ENCODE measurements at regions of chr3 and their contacts with region 1.

Region 1: DNA sequence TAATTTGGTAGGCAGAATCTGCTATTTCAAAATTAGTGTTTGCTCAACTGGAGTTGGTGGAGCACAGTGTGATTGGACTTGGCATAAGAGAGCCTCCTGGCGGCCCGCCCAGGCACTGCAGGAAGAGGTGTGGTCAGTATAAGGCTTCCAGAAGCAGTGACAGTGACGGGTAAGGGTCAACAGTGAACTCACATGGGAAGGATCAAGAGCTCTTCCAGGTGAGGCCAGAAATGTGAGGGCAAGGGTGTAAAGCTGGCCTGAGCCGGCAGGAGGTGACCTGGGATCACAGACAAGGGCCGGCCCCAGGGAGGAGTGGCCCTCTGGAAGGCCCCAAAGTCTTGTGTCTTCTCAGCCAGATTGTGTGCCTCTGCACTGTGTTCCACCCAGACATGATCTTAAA is 93.2 kb upstream of the RNF7 start:
- DNase-seq: peak; percentile 79
- CTCF ChIP-seq: peak; percentile 83

Region 2: DNA sequence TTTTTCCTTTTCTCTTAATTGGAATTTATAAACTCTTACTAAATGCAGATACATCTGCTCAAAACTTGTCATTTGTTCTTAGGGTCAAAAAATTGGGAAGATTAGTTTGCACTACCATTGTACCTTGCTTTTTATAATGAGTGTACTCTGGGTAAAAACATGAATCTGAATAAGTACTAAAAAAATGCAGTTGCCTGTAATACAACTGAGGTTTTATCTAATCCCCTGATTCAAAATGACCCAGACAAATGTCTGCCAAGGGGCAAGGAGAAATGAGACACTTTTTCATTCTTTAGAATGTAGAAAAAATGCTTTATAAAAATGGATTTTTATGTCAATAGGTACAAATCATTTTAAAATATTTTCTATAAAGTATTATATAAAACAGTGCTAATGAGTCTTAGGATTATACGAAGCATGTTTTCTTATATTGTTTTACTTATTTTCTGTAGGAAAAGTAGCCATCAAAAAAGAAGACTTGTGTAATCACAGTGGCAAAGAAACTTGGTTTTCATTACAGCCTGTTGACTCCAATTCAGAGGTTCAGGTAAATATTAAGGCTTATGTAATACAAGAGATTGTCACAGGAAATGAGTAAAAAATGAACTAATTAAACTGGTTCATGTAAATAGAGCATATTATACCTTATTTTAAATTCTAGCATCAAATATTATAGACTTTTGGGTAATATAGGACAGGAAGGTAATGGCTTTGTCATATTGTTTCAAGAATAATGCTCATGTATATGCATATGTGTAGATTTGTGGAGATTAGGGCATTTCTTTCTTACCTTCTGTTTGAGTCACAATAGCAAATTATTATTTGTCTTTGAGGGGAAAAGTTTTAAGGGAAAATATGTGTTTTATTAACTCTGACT is 115.4 kb before region 1 on chr3:
- CTCF ChIA-PET with region 1: no interaction called
- POLR2A ChIA-PET with region 1: no interaction called
- DNase-seq: no peak
- CTCF ChIP-seq: no peak

Region 3: DNA sequence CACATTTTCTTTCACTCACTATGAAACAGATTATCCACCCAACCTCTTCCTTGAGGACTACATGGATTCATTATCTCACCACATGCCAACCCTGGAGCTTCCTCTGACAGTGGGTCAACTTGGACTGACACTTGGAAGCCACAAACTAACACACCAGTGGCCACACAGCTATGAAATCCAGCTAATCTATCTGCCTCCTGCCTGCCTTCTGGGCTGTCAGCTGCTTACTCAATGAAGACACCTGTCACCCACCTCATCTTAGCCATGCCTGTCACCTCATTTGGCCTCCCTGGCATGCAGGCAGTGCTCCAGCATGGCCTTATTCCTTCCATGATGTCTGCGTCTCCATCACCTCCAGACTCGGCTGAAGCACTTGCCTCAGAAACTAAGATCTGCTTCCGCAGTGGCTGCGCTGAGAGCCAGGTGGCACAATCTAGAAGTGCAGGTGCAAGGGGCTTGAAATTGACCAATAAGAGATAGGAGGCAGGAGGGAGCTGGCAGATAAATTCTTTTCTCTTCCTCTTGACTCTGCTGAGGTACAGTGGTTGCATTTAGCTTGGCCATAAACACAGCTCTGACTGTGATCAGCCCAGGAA is 12.1 kb before region 1 on chr3:
- CTCF ChIA-PET with region 1: interaction called, 16 read pairs
- POLR2A ChIA-PET with region 1: no interaction called
- DNase-seq: no peak
- CTCF ChIP-seq: no peak

Region 4: GRCh38 chr3:141669434-141669833 is 24.5 kb after region 1 on chr3:
- CTCF ChIA-PET with region 1: no interaction called
- POLR2A ChIA-PET with region 1: no interaction called
- DNase-seq: no peak
- CTCF ChIP-seq: no peak

Measured in GM10248 (cell line).